SK-N-SH (cell line): ENCODE measurements at regions of chr11 and their contacts with region 1.

Region 1: DNA sequence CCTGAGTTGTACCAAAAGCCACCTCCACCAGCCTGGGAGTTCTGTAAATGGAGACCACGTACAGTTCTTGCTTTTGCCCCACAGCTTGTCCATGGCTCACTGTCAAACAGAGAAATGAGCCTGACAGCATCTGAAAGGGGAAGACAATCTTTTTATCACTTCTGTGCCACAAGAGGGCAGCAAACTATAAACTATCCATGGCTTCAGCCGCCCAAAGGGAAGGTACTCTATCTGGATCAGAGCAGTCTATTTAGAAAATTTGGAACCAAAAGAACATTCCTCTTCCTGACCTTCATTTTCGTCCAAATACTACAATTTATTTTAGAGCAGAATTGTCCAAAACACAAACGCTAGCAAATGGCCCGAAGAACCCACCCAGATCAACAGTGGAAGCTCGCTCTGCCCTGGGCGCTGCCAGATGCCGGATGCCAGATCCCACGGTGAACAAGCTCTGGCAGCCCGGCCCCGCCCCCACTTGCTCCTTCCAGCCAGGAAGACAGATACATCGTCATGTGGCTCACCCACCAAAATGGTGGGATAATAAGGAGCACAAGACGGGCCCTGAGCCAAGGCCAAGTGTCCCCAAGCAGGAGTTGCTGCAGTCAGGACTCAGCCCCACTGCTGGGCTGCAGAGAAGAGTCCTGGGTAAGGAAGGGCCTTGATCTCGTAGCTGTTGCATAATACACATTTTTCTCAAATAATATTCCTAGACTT is 23.9 kb upstream of the SCGB1A1 start:
- DNase-seq: peak; percentile 89
- H3K4me3 ChIP-seq: peak overlapping the region; percentile 28 to 35
- H3K27ac ChIP-seq: peak overlapping the region; percentile 6 to 93; a peak in 3 of 4 replicates
- H3K4me1 ChIP-seq: peaks cover 18 to 39% of the 10 kb centered on the region in 2 experiments; a peak in 3 of 4 replicates
- H3K27me3 ChIP-seq: no peaks in the 10 kb centered on the region
- CTCF ChIP-seq: peak; percentile 78
- EP300 ChIP-seq: peak in 1 of 2 experiments; percentile 56; a peak in 2 of 4 replicates
- RAD21 ChIP-seq: peak; percentile 93

Region 2: GRCh38 chr11:62108017-62108750 is 286.8 kb before region 1 on chr11:
- CTCF ChIA-PET with region 1: no interaction called
- POLR2A ChIA-PET with region 1: no interaction called
- DNase-seq: peak; percentile 69
- H3K4me3 ChIP-seq: no peak overlapping the region; a peak in 1 of 4 replicates
- H3K27ac ChIP-seq: no peak overlapping the region
- H3K4me1 ChIP-seq: peaks cover 0 to 3% of the 10 kb centered on the region in 2 experiments; a peak in 1 of 4 replicates
- H3K27me3 ChIP-seq: no peaks in the 10 kb centered on the region
- CTCF ChIP-seq: peak; percentile 87
- EP300 ChIP-seq: no peak
- RAD21 ChIP-seq: peak; percentile 92

Region 3: GRCh38 chr11:62152245-62153086 is 242.5 kb before region 1 on chr11:
- CTCF ChIA-PET with region 1: no interaction called
- POLR2A ChIA-PET with region 1: no interaction called
- DNase-seq: peak; percentile 6
- H3K4me3 ChIP-seq: no peak overlapping the region
- H3K27ac ChIP-seq: no peak overlapping the region
- H3K4me1 ChIP-seq: no peaks in the 10 kb centered on the region
- H3K27me3 ChIP-seq: no peaks in the 10 kb centered on the region
- CTCF ChIP-seq: no peak
- EP300 ChIP-seq: no peak
- RAD21 ChIP-seq: no peak

Region 4: DNA sequence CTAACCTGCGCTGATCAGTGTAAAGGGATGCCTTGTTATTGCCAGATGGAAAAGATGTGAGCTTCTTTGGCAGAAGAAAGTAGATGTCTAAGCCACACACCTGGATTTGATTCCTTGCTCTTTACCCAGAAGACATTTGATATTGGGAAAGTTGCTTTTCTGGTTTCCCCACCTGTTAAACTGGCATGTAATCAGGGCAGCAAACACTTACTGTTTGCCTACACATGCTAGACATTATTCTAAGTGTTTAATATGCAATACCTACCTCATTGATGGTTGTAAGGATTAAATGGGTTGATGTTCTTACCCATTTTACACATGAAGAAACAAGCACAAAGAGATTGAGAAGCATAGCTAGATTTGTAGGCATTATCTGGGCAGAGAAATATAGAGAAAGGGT is 41.1 kb before region 1 on chr11:
- CTCF ChIA-PET with region 1: no interaction called
- POLR2A ChIA-PET with region 1: no interaction called
- DNase-seq: no peak
- H3K4me3 ChIP-seq: no peak overlapping the region
- H3K27ac ChIP-seq: no peak overlapping the region
- H3K4me1 ChIP-seq: no peaks in the 10 kb centered on the region
- H3K27me3 ChIP-seq: no peaks in the 10 kb centered on the region
- CTCF ChIP-seq: no peak
- EP300 ChIP-seq: no peak
- RAD21 ChIP-seq: no peak

Region 5: DNA sequence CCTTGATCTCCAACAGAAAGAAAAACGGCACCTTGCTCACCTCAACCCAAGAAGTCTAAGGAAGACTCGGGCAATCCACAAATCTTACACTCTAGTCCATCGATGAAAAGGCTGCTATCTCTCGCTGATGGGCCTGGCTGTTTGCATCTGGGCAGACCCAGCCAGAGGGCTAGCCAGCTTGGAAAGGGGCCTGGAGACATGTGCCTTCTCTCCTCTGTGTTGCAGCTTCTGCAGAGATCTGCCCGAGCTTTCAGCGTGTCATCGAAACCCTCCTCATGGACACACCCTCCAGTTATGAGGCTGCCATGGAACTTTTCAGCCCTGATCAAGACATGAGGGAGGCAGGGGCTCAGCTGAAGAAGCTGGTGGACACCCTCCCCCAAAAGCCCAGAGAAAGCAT is 27.0 kb after region 1 on chr11:
- CTCF ChIA-PET with region 1: interaction called, 39 read pairs
- POLR2A ChIA-PET with region 1: no interaction called
- DNase-seq: no peak
- H3K4me3 ChIP-seq: no peak overlapping the region
- H3K27ac ChIP-seq: no peak overlapping the region
- H3K4me1 ChIP-seq: peaks cover 4 to 12% of the 10 kb centered on the region in 2 experiments; a peak in 3 of 4 replicates
- H3K27me3 ChIP-seq: no peaks in the 10 kb centered on the region
- CTCF ChIP-seq: no peak
- EP300 ChIP-seq: no peak
- RAD21 ChIP-seq: no peak

Region 6: DNA sequence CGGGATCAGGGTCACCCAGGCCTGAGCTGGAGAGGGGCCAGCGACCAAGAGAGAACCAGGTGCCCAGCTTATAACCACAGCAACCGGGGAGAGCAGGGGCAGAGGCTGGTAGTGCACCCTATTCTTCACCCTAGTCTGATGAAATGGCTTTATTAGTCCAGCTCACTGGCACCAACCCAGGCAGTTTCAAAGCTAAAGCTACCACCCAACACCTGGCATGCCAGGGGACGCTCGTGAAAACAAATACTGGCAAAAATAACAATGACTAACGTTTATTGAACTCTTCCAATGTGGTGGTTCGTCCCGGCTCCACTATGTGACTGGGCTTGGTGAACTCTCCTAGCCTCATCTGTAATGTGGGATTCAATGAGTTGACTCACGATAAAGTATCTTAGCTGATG is 54.5 kb after region 1 on chr11:
- CTCF ChIA-PET with region 1: interaction called, 14 read pairs
- POLR2A ChIA-PET with region 1: no interaction called
- DNase-seq: no peak
- H3K4me3 ChIP-seq: no peak overlapping the region
- H3K27ac ChIP-seq: no peak overlapping the region
- H3K4me1 ChIP-seq: peaks cover 6% of the 10 kb centered on the region in 2 experiments
- H3K27me3 ChIP-seq: no peaks in the 10 kb centered on the region
- CTCF ChIP-seq: no peak
- EP300 ChIP-seq: no peak
- RAD21 ChIP-seq: no peak

Region 7: DNA sequence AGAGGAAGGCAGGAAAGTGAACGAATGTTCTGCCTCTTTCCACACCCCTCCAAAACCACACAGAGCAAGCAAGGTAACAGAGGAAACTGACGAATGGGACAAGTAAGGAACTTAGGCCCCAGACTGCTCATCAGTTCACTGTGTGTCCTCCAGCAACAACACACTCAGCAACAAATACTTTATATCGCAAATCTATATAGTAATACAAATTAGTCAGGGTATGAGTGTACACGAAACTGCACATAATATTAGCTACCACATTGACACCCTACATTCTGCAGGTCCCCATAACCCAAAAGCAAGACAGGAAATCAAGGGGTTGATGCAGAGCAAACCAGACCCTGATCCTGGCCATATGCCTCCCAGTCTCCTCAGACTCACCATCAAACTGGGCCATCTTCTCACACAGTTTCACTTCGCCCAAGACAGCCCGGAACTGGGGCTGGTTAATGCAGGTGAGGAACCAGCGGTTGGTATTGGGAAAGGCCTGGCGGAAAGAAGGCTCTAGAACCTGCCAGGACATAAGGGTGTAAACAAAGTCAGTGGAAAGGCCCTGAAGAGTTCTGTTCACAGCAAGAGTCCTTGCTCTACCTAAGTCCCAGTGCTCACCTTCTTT is 172.1 kb after region 1 on chr11:
- CTCF ChIA-PET with region 1: interaction called, 16 read pairs
- POLR2A ChIA-PET with region 1: no interaction called
- DNase-seq: no peak
- H3K4me3 ChIP-seq: no peak overlapping the region
- H3K27ac ChIP-seq: peak overlapping the region in 1 of 2 experiments; percentile 2; a peak in 1 of 4 replicates
- H3K4me1 ChIP-seq: peaks cover 5 to 13% of the 10 kb centered on the region in 2 experiments; a peak in 3 of 4 replicates
- H3K27me3 ChIP-seq: no peaks in the 10 kb centered on the region
- CTCF ChIP-seq: no peak
- EP300 ChIP-seq: no peak
- RAD21 ChIP-seq: no peak

Region 8: GRCh38 chr11:62621567-62622470 is 226.8 kb after region 1 on chr11 and contains the start of gene B3GAT3:
- CTCF ChIA-PET with region 1: interaction called, 10 read pairs
- POLR2A ChIA-PET with region 1: interaction called, 3 read pairs
- DNase-seq: peak; percentile 99
- H3K4me3 ChIP-seq: peak within 1 kb of the TSS; percentile 77 to 92
- H3K27ac ChIP-seq: peak within 1 kb of the TSS; percentile 78 to 86
- H3K4me1 ChIP-seq: peaks cover 7 to 15% of the 10 kb centered on the region in 2 experiments; a peak in 3 of 4 replicates
- H3K27me3 ChIP-seq: no peaks in the 10 kb centered on the region
- CTCF ChIP-seq: 0 out of 2 replicates have a peak, but pooled peaks have one; percentile 6
- EP300 ChIP-seq: 0 out of 4 replicates have a peak, but pooled peaks of 1 of the 2 experiments have one; percentile 24
- RAD21 ChIP-seq: no peak
- polyA plus RNA-seq, gene B3GAT3: 104 and 116 TPM in 2 replicates